HEK293 (cell line): ENCODE measurements at regions of chr12 and their contacts with region 1.

Region 1: GRCh38 chr12:95918194-95918993 is 24.0 kb downstream of the CCDC38 start:
- H3K4me3 ChIP-seq: no peak overlapping the region
- H3K27ac ChIP-seq: no peak overlapping the region
- H3K4me1 ChIP-seq: no peaks in the 10 kb centered on the region
- CTCF ChIP-seq: peak; percentile 71; the same call in 1 of the 2 replicates

Region 2: GRCh38 chr12:95951515-95951914 is 33.1 kb after region 1 on chr12:
- CTCF ChIA-PET with region 1: interaction called, 19 read pairs
- POLR2A ChIA-PET with region 1: no interaction called
- H3K4me3 ChIP-seq: no peak overlapping the region
- H3K27ac ChIP-seq: no peak overlapping the region
- H3K4me1 ChIP-seq: peaks cover 3% of the 10 kb centered on the region; the same call in 1 of the 2 replicates
- CTCF ChIP-seq: no peak

Region 3: DNA sequence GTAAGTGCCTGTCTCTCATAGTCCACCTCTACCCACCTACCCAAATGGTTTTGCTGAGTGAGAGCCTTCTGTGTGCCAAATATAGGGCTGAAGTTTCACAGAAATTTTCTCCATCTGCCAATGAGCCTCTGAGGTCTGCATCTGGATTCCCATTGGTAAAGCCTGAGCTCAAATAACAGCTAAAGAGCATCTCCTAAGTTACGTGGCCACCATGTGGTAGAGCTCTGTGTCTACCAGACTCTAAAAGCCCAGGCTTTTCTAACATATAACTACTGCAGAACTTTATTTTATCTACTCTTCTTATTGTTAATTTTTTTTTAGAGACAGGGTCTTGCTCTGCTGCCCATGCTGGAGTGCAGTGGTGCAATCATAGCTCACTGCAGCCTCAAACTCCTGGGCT is 40.7 kb after region 1 on chr12:
- CTCF ChIA-PET with region 1: interaction called, 21 read pairs
- POLR2A ChIA-PET with region 1: interaction called, 3 read pairs
- H3K4me3 ChIP-seq: no peak overlapping the region
- H3K27ac ChIP-seq: no peak overlapping the region
- H3K4me1 ChIP-seq: no peaks in the 10 kb centered on the region
- CTCF ChIP-seq: no peak

Region 4: GRCh38 chr12:95966287-95966870 is 48.0 kb after region 1 on chr12:
- CTCF ChIA-PET with region 1: interaction called, 17 read pairs
- POLR2A ChIA-PET with region 1: no interaction called
- H3K4me3 ChIP-seq: no peak overlapping the region
- H3K27ac ChIP-seq: no peak overlapping the region
- H3K4me1 ChIP-seq: no peaks in the 10 kb centered on the region
- CTCF ChIP-seq: no peak